Posterior cingulate gyrus (tissue), 11 donors: ENCODE measurements at regions of chr20 and their contacts with region 1.

Region 1: GRCh38 chr20:43187476-43188233 is 2.1 kb downstream of the PTPRT start:
- DNase-seq: peak; percentile 70 to 98 (median 88)

Region 2: DNA sequence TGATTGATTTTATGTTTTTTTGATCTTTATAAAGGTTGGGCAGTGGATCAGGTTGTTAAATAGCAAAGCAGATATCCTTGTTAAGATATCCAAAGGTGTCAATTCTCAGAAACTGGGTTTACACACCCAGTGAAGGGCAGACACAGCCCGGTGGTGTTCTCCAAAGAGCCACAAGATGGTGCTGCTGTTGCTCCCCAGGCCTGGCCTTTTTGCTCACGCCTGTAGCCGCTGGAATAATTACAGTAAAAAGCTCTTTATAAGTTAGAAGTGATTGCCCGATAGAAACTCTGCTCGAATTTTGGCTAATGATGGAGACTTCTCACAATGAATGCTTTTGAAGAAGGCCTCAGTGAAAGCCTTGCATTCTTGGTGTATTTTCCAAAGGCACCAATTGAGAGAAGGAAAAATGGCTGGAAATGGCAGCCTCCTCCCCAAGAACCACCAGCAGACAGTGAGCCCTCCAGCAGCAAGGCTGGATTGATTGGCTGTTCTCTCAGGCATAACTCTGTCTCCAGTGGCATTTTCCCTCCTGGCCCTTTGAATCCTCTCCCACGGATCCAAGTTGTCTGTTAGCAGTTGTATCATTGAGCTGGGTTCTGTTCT is 1449.0 kb before region 1 on chr20:
- intact Hi-C with region 1: loop called (anchors 2 kb)
- DNase-seq: peak; percentile 51 to 96 (median 72)

Region 3: DNA sequence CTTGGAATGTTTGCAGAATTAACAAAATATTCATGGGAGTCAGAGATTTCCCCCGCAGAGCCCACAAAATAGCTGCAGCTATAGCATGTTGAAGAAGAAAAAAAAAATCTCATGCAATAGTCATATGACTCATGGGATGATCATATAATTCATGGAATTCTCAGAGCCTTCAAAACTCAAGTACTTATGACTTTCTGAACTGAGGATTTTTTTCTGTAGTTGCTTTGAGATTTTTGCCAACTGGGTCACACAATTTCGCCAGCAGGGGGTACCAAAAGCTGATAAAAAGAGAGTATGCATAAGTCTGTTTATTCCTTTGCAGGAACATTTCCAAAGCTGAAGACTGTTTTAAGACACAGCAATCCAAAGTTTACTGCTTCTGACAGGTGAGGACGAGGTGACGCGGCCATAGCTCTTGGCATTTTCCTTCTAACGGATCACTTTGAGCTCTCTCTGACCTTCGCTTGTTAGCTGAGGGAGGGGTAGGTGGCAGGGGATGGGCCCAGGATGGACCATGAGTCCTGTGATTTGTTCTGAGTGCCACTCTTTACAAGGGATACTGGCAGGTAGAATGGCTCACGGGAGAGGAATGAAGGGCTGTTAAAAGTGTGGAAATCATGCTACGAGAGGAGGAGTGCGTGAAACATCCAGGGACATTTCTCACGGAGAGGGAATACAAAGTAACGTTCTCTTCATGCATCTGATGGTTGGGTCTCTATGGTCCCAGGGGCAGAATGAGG is 983.3 kb before region 1 on chr20:
- intact Hi-C with region 1: loop called (anchors 1 kb)
- DNase-seq: peak in 5 of 10 donors; percentile 20 to 69 (median 41)

Region 4: DNA sequence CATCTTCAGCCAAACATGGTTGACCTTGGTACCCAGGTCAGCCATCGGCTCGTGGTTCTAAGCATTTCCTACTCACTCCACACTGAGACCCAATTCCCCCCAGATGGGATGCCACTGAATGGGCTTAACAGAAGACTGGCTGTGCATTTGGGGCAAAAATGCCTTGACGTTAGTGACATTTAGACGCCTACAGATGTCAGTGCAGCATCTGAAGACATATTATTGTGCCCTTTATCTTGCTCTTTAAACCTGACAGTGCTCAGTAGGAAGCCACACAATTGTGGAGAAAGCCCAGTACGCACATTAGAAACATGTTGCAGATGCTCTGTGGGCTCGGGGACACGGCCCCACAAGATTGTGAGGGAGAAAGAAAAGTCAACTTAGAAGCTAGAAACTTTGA is 412.6 kb before region 1 on chr20:
- intact Hi-C with region 1: loop called (anchors 1 kb)
- DNase-seq: no peak

Region 5: GRCh38 chr20:43068482-43068881 is 119.2 kb before region 1 on chr20:
- intact Hi-C with region 1: loop called (anchors 2 kb)
- DNase-seq: no peak